Activated naive CD8-positive, alpha-beta T cell treated with anti-CD3 and anti-CD28 coated beads, Interleukin-2, amount 10 ng/mL, durations not matched to agents 7 days and 5 days (primary cell): ENCODE measurements at regions of chr19 and their contacts with region 1.

Region 1: DNA sequence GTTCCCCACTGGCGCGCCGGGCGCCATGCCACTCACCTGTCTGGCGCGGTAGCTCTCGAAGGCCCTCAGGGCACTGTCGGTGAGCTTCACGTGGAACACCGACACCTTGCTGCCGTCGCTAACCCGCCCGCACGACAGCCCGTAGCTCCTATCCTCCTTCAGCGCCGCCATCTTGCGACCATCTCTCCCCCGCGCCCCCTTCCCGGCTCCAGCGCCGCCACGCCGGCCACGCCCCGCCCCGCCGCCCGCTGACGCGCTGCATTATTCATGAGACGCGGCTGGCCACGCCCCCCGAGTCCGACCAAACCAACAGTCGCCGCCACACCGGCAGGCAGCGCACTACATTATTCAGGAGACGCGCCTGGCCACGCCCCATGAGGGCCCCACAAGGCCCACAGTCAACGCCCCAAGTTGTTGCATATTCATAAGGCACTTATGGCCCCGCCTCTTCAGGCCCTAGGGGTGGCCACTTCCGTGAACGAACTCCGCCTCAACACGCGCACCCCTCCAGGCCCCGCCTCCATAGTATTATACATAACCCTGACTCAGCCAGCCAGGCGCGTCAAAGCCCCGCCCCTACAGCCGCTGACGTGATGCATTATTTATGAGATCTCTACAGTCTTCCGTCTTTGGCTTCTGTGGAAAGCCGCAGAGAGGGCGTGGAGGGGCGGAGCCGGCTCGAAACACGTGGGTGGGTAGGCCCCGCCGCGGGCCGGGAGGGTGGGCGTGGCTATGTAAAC is at the start of gene ELL:
- DNase-seq: peak; percentile 100
- ATAC-seq: peak; percentile 92
- H3K4me3 Mint-ChIP-seq: peak within 1 kb of the TSS; percentile 98
- H3K27ac Mint-ChIP-seq: peak within 1 kb of the TSS; percentile 95
- H3K4me1 Mint-ChIP-seq: peaks cover 5% of the 10 kb centered on the region
- H3K27me3 Mint-ChIP-seq: no peaks in the 10 kb centered on the region
- total RNA-seq, gene ELL: 28.5 to 31.2 TPM

Region 2: DNA sequence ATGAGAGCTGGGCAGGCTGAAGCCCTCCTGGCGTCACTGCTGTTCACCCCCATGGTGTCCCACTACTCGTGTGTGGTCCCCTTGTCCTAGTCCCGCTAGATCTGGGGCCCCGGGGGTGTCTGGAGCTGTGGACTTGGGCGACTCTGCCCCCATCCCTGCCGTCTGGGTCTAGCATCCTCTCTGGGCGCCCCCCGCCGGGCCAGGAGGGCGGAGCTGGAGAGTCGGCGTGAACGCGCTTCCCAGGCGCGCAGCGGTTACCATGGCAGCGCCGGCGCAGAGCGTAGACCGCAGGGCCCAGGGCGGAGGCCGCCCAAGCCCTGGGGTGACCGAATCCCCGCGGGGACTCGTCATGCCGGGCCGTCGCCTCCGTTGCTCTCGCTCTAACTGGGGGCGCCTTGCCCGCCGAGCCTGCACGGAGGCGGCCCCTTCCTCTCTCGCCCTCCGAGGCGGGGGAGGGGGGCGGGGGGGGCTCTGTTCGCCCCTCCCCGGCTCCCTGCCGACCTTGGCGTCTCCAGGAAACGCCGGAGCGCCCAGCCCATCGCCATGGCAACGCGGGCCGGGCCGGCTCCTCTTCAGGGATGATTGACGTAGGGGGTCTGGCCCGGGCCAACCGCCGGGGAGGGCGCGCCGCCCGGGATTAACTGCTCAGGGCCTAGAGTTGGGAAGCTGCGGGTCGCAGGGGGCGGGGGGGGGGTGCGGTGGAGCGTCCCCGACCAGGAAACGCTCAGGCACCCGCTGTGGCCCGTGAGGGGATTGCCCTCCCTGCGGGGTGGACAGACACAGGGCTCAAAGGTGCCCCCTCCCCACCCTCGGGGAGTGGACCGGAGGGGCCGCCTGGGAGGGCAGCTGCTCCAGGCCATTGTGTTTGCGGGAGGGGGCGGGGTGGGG is 93.0 kb before region 1 on chr19:
- POLR2A ChIA-PET with region 1: interaction called, 13 read pairs
- DNase-seq: peak; percentile 95
- ATAC-seq: peak; percentile 77
- H3K4me3 Mint-ChIP-seq: peak overlapping the region; percentile 73
- H3K27ac Mint-ChIP-seq: peak overlapping the region; percentile 83
- H3K4me1 Mint-ChIP-seq: peaks cover 14% of the 10 kb centered on the region
- H3K27me3 Mint-ChIP-seq: no peaks in the 10 kb centered on the region

Region 3: DNA sequence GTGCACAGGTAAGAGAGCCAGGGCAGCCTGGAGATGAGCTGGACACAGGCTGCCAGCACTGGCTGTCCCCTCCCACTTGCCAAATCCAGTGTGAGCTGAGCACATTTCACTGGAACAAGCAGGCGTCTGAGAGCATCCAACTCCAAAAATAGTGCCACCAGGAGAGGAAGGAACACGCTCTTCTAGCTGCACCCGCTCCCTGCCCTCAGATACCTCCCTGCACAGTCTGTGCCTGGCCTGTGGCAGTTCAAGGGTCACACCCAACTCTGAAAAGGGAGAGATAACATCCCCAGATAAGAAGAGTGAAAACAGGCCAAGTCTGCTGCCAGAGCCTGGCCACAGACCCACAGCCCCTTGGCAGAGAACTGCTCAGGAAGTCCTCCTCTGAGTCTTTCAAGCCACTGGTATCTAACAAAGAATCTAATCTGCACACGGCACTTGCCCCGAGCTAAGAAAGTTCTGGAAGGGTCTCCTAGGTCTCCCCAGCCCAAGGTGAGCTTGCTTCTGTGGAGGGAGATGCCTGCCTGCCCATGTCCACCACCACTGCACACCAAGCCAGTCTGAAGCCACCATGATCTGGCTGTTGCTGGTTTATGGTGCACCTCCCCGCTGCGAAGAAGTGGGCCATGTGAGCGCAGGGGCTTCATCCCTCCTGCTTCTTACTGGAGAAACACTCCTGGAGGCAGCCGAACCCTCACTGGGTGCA is 14.9 kb before region 1 on chr19:
- POLR2A ChIA-PET with region 1: interaction called, 12 read pairs
- DNase-seq: no peak
- ATAC-seq: peak; percentile 69
- H3K4me3 Mint-ChIP-seq: peak overlapping the region; percentile 43
- H3K27ac Mint-ChIP-seq: peak overlapping the region; percentile 82
- H3K4me1 Mint-ChIP-seq: peaks cover 49% of the 10 kb centered on the region
- H3K27me3 Mint-ChIP-seq: no peaks in the 10 kb centered on the region

Region 4: GRCh38 chr19:18542936-18543815 is 21.1 kb after region 1 on chr19 and contains the start of gene FKBP8:
- POLR2A ChIA-PET with region 1: interaction called, 12 read pairs
- DNase-seq: peak; percentile 96
- ATAC-seq: peak; percentile 92
- H3K4me3 Mint-ChIP-seq: peak within 1 kb of the TSS; percentile 95
- H3K27ac Mint-ChIP-seq: peak within 1 kb of the TSS; percentile 99
- H3K4me1 Mint-ChIP-seq: peaks cover 10% of the 10 kb centered on the region
- H3K27me3 Mint-ChIP-seq: no peaks in the 10 kb centered on the region
- total RNA-seq, gene FKBP8: 261 to 275 TPM

Region 5: GRCh38 chr19:18557474-18558201 is 35.6 kb after region 1 on chr19 and contains the start of gene KXD1:
- POLR2A ChIA-PET with region 1: interaction called, 32 read pairs
- DNase-seq: peak; percentile 95
- ATAC-seq: peak; percentile 99
- H3K4me3 Mint-ChIP-seq: peak within 1 kb of the TSS; percentile 93
- H3K27ac Mint-ChIP-seq: peak within 1 kb of the TSS; percentile 89
- H3K4me1 Mint-ChIP-seq: peaks cover 20% of the 10 kb centered on the region
- H3K27me3 Mint-ChIP-seq: no peaks in the 10 kb centered on the region
- total RNA-seq, gene KXD1: 96.7 to 105 TPM

Region 6: GRCh38 chr19:18571564-18572300 is 49.7 kb after region 1 on chr19 and contains the start of gene UBA52:
- POLR2A ChIA-PET with region 1: interaction called, 30 read pairs
- DNase-seq: peak; percentile 100
- ATAC-seq: peak; percentile 93
- H3K4me3 Mint-ChIP-seq: peak within 1 kb of the TSS; percentile 97
- H3K27ac Mint-ChIP-seq: peak within 1 kb of the TSS; percentile 92
- H3K4me1 Mint-ChIP-seq: peaks cover 16% of the 10 kb centered on the region
- H3K27me3 Mint-ChIP-seq: no peaks in the 10 kb centered on the region
- total RNA-seq, gene UBA52: 1,538 to 1,547 TPM

Region 7: DNA sequence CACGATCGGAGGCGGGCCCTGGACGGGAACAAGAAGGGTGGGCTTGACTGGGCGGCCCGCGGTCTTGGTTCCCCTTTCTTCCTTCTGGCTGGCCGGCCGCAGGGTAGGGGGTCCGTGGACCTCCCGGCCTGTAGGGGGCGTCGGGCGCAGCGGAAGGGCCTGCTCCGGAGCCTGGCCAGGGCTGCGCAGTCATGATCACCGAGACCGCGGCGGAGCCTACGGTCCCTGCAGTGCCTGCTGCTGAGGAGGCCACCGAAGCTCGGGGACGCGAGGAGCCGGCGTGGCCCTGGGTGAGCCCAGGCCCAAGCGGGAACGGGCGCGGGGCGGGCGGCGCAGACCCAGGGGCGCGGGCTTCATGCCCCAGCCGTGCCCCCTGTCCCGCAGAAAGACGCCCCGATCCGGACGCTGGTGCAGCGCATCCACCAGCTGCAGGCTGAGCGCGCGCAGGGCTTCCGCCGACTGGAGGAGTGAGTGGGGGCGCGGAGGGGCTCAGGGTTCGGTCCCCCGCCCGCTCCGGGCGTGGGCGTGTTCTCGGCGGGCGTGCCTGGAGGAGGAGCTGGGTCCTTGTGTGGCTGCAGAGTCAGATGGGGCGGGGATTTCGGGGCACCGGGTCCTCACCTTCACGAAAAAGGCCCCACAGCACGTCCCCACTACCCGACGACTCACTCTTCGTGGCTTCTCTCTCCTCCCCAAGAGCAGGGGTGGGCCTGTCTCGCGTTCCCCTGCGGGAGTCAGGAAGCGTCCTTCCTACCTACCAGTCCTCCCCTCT is 66.7 kb after region 1 on chr19 and contains the start of gene REX1BD:
- POLR2A ChIA-PET with region 1: interaction called, 40 read pairs
- DNase-seq: peak; percentile 90
- ATAC-seq: peak; percentile 79
- H3K4me3 Mint-ChIP-seq: peak within 1 kb of the TSS; percentile 93
- H3K27ac Mint-ChIP-seq: peak within 1 kb of the TSS; percentile 97
- H3K4me1 Mint-ChIP-seq: peaks cover 33% of the 10 kb centered on the region
- H3K27me3 Mint-ChIP-seq: peaks cover 4% of the 10 kb centered on the region
- total RNA-seq, gene REX1BD: 105 to 109 TPM

Region 8: DNA sequence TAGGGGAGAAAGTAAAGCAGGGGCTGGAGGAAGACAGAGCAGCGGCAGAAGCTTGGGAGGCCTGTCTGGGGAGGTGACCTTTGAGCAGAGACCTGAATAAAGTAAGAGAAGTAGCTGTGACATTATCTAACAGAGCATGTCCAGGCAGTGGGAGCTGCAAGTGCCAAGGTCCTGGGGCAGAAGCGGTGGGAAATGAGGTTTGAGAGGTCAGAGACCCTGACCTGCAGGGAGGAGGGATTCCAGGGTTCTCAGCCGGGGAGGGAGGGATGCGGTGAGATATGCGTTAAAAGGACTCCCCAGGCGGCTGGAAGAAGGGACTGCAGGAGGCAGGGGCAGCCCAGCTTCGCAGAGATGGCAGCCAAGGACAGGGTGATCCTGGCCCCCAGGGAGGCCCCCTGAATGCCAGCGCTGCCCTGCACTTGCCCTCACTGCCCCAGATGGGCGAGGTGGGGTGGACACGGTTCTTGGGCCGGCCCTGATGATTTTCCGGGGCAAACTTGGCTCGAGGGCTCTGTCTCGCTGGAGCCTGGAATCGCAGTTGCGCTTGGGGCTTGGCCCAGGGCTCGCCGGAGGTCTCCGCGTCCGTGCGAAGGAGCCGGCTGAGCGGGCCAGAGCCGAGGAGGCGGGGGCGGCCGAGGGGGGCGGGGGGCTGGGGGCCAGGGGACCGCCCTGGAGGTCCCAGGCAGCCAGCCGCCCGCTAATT is 81.4 kb after region 1 on chr19:
- POLR2A ChIA-PET with region 1: no interaction called
- DNase-seq: no peak
- ATAC-seq: peak; percentile 58
- H3K4me3 Mint-ChIP-seq: no peak overlapping the region
- H3K27ac Mint-ChIP-seq: no peak overlapping the region
- H3K4me1 Mint-ChIP-seq: peaks cover 4% of the 10 kb centered on the region
- H3K27me3 Mint-ChIP-seq: peaks cover 56% of the 10 kb centered on the region